Prostate gland (tissue), 2 donors: ENCODE measurements at regions of chr9 and their contacts with region 1.

Region 1: DNA sequence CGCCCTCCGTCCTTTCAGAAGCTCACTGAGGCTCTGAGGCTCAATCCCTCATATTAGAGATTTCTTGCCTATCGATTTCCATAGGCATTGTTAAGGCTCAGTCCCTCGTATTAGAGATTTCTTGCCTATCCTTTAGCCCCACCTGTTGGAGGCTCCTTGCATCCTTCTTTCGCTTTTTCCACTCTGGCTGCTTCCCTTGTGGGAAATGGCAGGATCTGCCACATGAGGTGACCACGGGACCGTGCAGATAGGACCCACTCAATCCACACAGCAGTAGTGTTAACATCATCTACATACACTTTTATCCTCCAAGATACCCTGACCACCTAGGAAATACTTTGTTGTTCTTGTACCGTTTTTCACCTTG is 19.5 kb downstream of the IFT74 start:
- DNase-seq: no peak
- H3K4me3 ChIP-seq: no peak overlapping the region
- H3K27ac ChIP-seq: no peak overlapping the region
- H3K4me1 ChIP-seq: no peaks in the 10 kb centered on the region
- H3K27me3 ChIP-seq: no peaks in the 10 kb centered on the region
- CTCF ChIP-seq: peak in 2 of 4 experiments; percentile 26 to 36
- POLR2A ChIP-seq: no peak

Region 2: DNA sequence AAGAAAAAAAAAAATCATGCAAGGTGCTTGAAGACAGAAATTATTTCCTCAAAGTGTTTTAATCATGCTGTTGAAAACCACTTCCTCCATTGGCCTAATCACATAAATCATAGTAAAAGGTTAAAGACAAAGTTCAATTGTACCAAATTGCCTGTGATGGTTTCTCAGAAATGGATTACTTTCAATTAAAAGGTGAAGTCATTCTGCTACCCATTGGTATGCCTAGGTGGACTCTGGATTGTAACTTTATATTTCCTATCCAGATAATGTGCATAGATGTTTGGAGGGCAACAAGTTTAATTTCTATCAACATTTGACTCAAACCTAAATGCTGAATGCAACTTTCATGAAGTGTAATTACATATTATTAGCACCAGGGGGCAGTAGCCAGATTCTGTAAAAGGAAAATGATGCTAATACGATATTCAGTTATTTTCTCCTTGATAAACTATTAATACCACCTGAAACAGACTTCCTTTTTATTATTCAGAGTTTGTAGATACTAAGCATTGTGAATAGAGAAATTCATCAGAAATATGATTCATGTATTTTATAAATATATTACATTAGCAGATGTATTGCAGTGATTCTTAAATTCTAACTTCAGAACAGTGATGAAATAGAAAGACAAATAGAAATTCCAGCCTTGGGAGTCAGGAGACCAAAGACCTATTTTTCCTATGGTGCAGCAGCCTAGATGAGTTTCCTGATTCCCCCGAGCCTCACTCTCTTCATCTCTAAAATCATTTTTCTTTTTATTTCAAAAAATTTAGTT is 231.3 kb before region 1 on chr9:
- intact Hi-C with region 1: loop called (anchors 5 kb)
- DNase-seq: no peak
- H3K4me3 ChIP-seq: no peak overlapping the region
- H3K27ac ChIP-seq: no peak overlapping the region
- H3K4me1 ChIP-seq: no peaks in the 10 kb centered on the region
- H3K27me3 ChIP-seq: no peaks in the 10 kb centered on the region
- CTCF ChIP-seq: peak; percentile 63 to 82 (median 70)
- POLR2A ChIP-seq: no peak